ENCODE measurements at regions of chr10 and their contacts with region 1.

Region 1: GRCh38 chr10:91887272-91888076 is 21.8 kb downstream of the FGFBP3 start:
- DNase-seq: peak; percentile 73 to 77
- H3K4me3 ChIP-seq: peak overlapping the region; percentile 58
- H3K4me3 Mint-ChIP-seq: peak overlapping the region; percentile 92
- H3K27ac Mint-ChIP-seq: peak overlapping the region; percentile 82
- H3K4me1 ChIP-seq: peaks cover 6% of the 10 kb centered on the region; the same call in 1 of the 2 replicates
- H3K4me1 Mint-ChIP-seq: peaks cover 13% of the 10 kb centered on the region
- H3K27me3 ChIP-seq: no peaks in the 10 kb centered on the region
- H3K27me3 Mint-ChIP-seq: no peaks in the 10 kb centered on the region
- CTCF ChIP-seq: no peak

Region 2: DNA sequence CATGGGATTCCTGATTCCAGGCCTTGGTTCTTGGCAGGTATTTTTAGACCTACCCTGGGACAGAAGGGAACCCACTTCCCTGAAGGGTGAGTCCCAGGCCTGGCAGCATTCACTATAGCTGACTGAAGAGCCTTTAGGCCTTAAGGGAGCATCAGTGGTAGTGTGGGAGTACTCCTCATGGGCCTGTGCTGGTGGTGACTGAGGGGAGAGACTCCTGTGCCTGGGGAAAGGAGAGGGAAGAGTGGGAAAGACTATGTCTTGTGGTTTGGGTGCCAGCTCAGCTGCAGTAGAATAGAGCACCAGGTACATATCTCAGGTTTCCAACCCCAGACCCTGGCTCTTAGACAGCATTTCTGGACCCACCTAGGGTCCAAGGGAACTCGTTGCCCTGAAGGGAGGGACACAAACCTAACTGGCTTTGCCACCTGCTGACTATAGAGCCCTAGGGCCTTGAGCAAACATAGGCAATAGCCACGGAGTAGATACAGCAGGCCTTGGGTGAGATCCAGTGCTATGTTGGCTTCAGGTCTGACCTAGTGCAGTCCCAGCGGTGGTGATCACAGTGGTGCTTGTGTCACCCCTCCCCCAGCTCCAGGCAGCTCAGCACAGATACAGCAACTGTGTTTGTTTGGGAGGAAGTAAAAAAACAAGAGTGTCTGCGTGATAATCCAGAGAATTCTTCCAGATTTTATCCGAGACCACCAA is 99.1 kb before region 1 on chr10:
- CTCF ChIA-PET with region 1: no interaction called
- POLR2A ChIA-PET with region 1: no interaction called
- intact Hi-C with region 1: no loop called
- DNase-seq: no peak
- H3K4me3 ChIP-seq: no peak overlapping the region
- H3K4me3 Mint-ChIP-seq: no peak overlapping the region
- H3K27ac Mint-ChIP-seq: no peak overlapping the region
- H3K4me1 ChIP-seq: no peaks in the 10 kb centered on the region
- H3K4me1 Mint-ChIP-seq: no peaks in the 10 kb centered on the region
- H3K27me3 ChIP-seq: no peaks in the 10 kb centered on the region
- H3K27me3 Mint-ChIP-seq: no peaks in the 10 kb centered on the region
- CTCF ChIP-seq: no peak

Region 3: DNA sequence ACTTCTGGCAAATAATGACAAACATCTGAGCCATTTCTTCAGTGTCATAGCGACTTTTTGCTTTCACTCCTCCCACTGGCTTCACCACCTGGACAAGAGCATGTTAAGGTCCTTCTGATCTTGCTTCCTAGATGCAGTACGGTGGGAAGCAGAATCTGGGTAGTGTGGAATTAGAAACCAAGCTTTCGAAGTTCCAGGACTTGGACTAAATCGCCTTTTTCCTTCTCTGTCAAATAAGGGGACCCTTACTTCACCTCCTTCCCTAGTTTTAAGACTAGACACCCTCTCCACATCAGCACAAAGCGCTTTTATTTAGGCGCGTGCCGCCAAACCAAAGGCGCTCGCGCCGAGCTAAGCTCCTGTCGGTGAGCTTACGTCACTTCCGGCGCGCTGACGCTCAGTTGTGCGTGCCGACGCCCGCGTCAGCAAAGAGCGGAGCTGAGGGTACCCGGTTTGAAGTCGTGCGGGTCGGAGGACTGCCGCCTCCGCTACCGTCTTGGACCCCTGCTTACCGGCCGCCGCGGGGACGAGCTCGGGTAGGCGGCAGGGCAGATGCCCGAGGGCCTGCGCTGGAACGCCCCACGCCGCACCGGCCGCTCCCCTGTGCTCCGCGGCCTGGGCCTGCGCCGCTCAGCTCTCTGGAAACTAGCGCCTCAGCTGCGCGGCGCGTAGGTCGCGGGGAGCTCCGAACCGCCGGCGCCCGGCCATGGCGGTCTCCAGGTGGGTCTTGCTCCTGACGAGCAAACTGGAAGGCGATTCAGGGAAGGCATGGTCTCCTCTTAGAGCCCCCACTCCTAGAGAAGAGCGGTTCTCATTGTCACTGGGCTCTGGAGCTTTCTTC is 36.1 kb after region 1 on chr10 and contains the start of gene BTAF1:
- CTCF ChIA-PET with region 1: no interaction called
- POLR2A ChIA-PET with region 1: interaction called, 10 read pairs
- intact Hi-C with region 1: no loop called
- DNase-seq: peak; percentile 89
- H3K4me3 ChIP-seq: peak within 1 kb of the TSS; percentile 85
- H3K4me3 Mint-ChIP-seq: peak within 1 kb of the TSS; percentile 90
- H3K27ac Mint-ChIP-seq: peak within 1 kb of the TSS; percentile 97
- H3K4me1 ChIP-seq: peaks cover 14% of the 10 kb centered on the region; the same call in 1 of the 2 replicates
- H3K4me1 Mint-ChIP-seq: peaks cover 26% of the 10 kb centered on the region
- H3K27me3 ChIP-seq: no peaks in the 10 kb centered on the region
- H3K27me3 Mint-ChIP-seq: no peaks in the 10 kb centered on the region
- CTCF ChIP-seq: no peak
- total RNA-seq, gene BTAF1: 47.7 and 49.7 TPM in 2 replicates